Activated CD4-positive, alpha-beta memory T cell treated with anti-CD3 and anti-CD28 coated beads for 36 hours (primary cell): ENCODE measurements at regions of chr16 and their contacts with region 1.

Region 1: DNA sequence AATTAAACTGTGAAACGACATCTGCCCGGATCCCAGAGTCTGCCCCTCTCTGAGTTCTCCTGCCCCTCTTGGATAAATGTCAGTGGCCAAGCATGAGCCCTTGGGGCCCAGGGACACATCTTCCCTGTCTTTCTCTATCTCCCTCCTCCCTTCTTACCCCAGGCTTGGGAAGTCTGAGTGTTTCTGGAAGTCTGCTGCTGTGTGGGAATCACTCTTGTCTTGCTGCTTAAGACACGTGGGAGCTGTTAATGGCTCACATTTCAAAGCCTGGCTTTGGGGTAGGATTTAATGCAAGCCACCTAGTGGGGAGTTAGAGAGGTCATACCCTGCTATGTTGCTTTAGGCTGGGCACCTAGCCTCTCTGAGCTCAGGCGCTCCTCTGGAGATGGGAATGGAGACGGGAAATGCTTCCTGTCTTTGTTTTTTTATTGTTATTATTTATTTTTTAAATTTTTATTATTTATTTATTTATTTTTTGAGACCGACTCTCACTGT is 218.5 kb upstream of the CIBAR2 start:
- DNase-seq: no peak
- H3K4me3 Mint-ChIP-seq: no peak overlapping the region
- H3K27ac Mint-ChIP-seq: no peak overlapping the region
- H3K4me1 Mint-ChIP-seq: peaks cover 9% of the 10 kb centered on the region
- H3K27me3 Mint-ChIP-seq: peaks cover 18% of the 10 kb centered on the region

Region 2: GRCh38 chr16:85262558-85263238 is 68.0 kb before region 1 on chr16:
- CTCF ChIA-PET with region 1: no interaction called
- POLR2A ChIA-PET with region 1: no interaction called
- intact Hi-C with region 1: no loop called
- DNase-seq: no peak
- H3K4me3 Mint-ChIP-seq: no peak overlapping the region
- H3K27ac Mint-ChIP-seq: no peak overlapping the region
- H3K4me1 Mint-ChIP-seq: no peaks in the 10 kb centered on the region
- H3K27me3 Mint-ChIP-seq: peaks cover 16% of the 10 kb centered on the region

Region 3: GRCh38 chr16:85305996-85306792 is 24.5 kb before region 1 on chr16:
- CTCF ChIA-PET with region 1: interaction called, 3 read pairs
- POLR2A ChIA-PET with region 1: no interaction called
- intact Hi-C with region 1: loop called (anchors 1 kb)
- DNase-seq: peak; percentile 93
- H3K4me3 Mint-ChIP-seq: no peak overlapping the region
- H3K27ac Mint-ChIP-seq: peak overlapping the region; percentile 79
- H3K4me1 Mint-ChIP-seq: peaks cover 33% of the 10 kb centered on the region
- H3K27me3 Mint-ChIP-seq: peaks cover 6% of the 10 kb centered on the region